CD4-positive, alpha-beta T cell (primary cell): ENCODE measurements at regions of chr11 and their contacts with region 1.

Region 1: DNA sequence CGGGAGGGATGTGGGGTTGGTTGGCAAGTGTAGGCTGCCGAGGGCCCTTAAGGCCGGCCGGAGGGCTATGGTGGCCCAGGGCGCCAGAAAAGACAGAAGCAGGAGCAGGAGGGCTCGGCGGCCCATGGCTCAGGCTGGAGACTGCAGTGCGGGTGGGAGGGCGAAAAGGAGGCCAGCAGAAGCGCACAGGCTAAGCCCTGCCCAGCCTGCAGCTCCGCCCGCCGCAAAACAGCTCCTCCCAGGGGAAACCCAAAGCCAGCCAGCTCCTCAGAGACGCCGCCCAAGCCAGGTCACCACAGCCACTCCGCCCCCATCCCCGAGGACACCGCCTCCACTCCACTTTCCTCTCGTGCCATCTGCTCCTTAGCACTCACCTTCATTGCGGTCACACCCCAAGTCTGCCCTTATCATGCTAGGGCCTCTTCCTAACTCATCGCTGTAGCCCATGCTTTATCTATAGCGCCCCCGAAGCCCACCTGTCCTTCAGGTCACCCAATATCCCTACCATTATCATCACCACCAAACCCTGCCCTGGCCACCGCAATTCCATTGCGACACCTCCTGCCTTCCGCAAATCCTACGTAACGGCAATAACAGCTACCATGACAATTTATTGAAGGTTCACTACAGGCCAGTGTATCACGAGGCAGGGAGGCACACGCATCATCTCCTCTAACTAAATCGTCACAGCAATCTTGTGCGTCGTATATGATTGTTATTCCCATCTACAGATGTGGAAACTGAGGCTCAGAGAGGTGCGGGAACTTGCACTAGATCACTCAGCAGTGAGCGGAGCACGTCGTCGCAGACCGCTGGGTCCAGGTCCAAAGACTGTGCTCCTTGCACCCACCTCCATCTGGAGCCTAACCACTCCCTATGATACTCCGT is at the start of gene PRCP:
- DNase-seq: peak; percentile 81 to 97 (median 91)
- ATAC-seq: peak; percentile 72
- H3K4me3 ChIP-seq: peak within 1 kb of the TSS; percentile 74
- H3K4me3 Mint-ChIP-seq: peak within 1 kb of the TSS; percentile 99
- H3K27ac ChIP-seq: peak within 1 kb of the TSS; percentile 94 to 98
- H3K27ac Mint-ChIP-seq: peak within 1 kb of the TSS; percentile 97
- H3K4me1 ChIP-seq: peaks cover 35% of the 10 kb centered on the region
- H3K4me1 Mint-ChIP-seq: peaks cover 42% of the 10 kb centered on the region
- H3K27me3 ChIP-seq: no peaks in the 10 kb centered on the region
- H3K27me3 Mint-ChIP-seq: no peaks in the 10 kb centered on the region
- CTCF ChIP-seq: no peak
- total RNA-seq, gene PRCP: 13.7 to 16.0 TPM

Region 2: DNA sequence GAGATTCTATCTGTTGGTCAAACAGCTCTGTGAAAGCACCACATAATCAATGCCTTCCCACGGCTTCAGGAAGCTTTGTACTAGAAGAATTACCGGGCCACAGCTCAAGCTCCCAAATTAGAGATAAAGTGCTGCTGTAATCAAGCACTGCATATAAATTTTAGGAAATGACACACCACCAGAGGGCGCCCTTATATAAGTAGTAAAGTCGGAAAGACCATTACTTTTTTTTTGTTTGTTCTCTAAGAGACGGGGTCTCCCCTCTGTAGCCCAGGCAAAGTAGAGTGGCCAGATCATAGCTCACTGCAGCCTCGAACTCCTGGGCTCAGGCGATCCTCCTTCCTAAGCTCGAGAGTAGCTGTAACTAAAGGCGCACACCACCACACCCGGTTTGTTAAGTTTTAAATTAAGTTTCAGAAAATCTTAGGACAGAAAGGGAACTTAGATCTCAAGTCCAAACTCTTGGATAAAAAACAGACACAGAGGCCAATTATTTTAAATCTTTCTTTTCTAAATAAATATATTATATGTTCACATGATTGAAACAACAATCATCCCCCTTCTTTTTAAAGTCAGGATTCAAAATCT is 32.9 kb before region 1 on chr11:
- CTCF ChIA-PET with region 1: interaction called, 8 read pairs
- POLR2A ChIA-PET with region 1: interaction called, 28 read pairs
- intact Hi-C with region 1: loop called (anchors 1 to 2 kb)
- DNase-seq: peak; percentile 37 to 88 (median 70)
- ATAC-seq: peak; percentile 66
- H3K4me3 ChIP-seq: no peak overlapping the region
- H3K4me3 Mint-ChIP-seq: no peak overlapping the region
- H3K27ac ChIP-seq: no peak overlapping the region
- H3K27ac Mint-ChIP-seq: no peak overlapping the region
- H3K4me1 ChIP-seq: peaks cover 5% of the 10 kb centered on the region
- H3K4me1 Mint-ChIP-seq: peaks cover 11% of the 10 kb centered on the region
- H3K27me3 ChIP-seq: no peaks in the 10 kb centered on the region
- H3K27me3 Mint-ChIP-seq: no peaks in the 10 kb centered on the region
- CTCF ChIP-seq: peak; percentile 80

Region 3: DNA sequence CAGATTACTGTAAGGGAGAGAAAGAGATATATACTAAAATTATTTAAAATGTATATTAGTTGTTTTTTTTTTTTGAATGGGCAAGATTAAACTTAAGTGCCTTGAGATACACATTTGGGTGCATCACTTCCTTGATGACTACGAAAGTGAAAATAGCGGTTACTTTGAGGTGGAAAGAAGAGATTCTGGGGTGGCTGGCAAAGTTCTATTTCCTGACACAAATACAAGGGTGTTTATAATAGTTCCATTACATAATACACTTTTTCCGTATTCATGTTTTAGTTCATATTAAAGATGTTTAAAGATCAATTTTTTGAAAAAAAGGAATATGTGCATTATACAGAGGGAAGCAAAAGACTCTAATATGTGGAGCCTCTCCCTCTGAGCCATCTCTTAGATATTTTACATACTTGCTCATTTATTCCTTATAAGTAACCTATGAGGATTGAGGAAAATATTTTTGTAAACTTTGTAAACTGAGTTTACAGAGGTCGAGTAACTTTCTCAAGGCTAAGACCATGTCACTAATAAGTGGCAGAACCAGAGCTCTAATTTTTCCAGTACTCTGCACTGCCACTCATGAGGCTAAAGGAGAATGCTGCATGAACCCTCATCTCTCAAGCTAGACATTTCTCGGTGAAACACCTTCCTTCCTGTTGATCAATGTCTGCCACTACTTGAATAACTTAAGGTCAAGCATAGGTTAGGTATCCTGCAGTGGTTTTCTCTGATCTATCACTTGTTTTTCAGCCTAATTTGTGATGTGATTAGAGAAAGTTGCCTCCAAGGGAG is 59.7 kb after region 1 on chr11:
- CTCF ChIA-PET with region 1: no interaction called
- POLR2A ChIA-PET with region 1: interaction called, 49 read pairs
- intact Hi-C with region 1: loop called in 1 of 2 experiments (anchors 2 kb)
- DNase-seq: peak in 10 of 14 experiments; percentile 12 to 92 (median 46)
- ATAC-seq: peak; percentile 85
- H3K4me3 ChIP-seq: peak overlapping the region; percentile 37
- H3K4me3 Mint-ChIP-seq: peak overlapping the region; percentile 69
- H3K27ac ChIP-seq: peak overlapping the region; percentile 76 to 81
- H3K27ac Mint-ChIP-seq: peak overlapping the region; percentile 97
- H3K4me1 ChIP-seq: peaks cover 45% of the 10 kb centered on the region
- H3K4me1 Mint-ChIP-seq: peaks cover 88% of the 10 kb centered on the region
- H3K27me3 ChIP-seq: no peaks in the 10 kb centered on the region
- H3K27me3 Mint-ChIP-seq: no peaks in the 10 kb centered on the region
- CTCF ChIP-seq: no peak

Region 4: DNA sequence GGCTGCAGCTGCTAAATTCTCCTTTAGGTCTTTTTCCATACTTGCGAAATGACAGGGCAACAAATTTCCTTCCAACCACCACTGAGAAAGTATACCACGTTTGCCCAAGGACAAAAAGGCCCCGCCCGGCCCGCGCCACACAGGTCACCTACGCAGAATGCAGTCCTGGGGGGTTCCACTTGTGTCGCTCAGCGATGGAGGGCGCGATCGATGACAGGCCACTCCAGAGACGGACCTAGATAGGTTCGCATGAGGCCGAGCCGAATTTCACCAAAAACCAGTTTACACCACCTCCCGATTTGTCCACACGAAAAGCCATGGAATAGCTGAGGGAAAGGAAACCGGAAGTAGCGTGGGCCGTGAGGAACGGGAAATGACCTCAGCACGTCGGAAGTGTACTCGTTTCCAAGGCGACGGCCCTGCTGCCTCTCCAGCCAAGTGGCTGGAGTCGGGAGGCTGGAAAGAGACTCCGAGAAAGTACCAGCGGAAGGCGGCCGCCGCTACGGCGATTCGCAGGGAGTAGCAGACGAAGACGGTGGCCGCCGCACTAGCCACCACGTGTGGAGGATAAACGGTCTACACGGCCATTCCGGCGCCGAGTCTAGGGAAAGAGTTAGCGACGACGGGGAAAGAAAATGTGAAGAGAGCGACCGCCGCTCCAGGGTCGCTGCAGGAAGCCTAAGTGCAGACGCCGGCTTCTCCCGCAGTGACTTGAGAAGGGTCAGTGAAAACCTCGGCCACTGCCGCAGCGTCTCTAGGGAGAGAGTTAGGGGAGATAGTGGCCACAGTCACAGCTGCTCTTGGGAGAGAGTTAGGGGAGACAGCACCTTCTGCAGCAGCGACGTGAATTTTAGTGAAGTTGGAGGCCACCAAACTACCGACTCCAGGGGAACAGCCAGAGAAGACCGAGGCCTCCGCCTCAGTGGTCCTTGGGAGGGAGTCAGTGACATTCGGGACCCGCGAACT is 293.1 kb after region 1 on chr11 and contains the start of gene ANKRD42:
- CTCF ChIA-PET with region 1: interaction called, 3 read pairs
- POLR2A ChIA-PET with region 1: interaction called, 37 read pairs
- intact Hi-C with region 1: loop called (anchors 2 kb)
- DNase-seq: peak; percentile 65 to 95 (median 76)
- ATAC-seq: peak; percentile 69
- H3K4me3 ChIP-seq: peak within 1 kb of the TSS; percentile 70
- H3K4me3 Mint-ChIP-seq: peak within 1 kb of the TSS; percentile 99
- H3K27ac ChIP-seq: peak within 1 kb of the TSS; percentile 88 to 97
- H3K27ac Mint-ChIP-seq: peak within 1 kb of the TSS; percentile 99
- H3K4me1 ChIP-seq: peaks cover 26% of the 10 kb centered on the region
- H3K4me1 Mint-ChIP-seq: peaks cover 60% of the 10 kb centered on the region
- H3K27me3 ChIP-seq: no peaks in the 10 kb centered on the region
- H3K27me3 Mint-ChIP-seq: no peaks in the 10 kb centered on the region
- CTCF ChIP-seq: no peak
- total RNA-seq, gene ANKRD42: 8.6 to 10.0 TPM

Region 5: DNA sequence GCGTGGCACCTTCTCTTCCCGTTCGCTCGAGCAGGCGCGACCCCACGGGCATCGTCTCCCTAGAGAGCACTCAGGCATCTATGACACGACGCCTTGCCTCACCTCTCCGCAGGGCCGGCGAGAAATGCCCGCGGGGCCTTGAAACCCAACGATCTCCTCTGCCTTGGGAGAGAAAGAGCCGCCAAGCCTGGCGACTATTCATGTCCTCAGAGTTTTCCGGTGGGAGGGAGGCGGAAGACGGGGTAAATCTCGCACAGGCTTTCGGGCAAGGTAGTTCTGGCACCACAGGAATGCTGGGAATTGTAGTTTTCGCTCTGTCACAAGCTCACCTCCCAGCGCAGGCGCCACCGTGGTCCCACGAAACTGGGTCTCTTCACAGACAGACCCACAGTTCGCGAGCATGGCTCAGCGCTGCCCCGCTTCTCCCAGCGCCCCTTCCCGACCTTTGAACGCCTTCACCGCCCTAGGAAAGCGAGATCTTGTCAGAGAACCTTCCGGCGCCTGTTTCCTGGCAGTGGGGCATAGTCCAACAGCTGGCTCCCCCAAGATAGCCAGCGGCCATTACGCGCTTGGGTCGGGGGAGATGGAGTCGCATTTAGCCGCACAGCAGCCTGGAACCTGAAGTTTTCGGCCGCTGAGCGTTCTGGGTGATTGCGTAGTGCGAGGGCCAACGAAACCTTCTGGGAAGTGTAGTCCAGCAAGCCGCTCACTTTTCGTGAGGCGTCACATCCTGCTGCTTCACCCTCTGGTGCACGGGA is 385.4 kb after region 1 on chr11 and contains the start of gene CCDC90B:
- CTCF ChIA-PET with region 1: interaction called, 6 read pairs
- POLR2A ChIA-PET with region 1: interaction called, 93 read pairs
- intact Hi-C with region 1: loop called (anchors 1 to 2 kb)
- DNase-seq: peak; percentile 88 to 98 (median 90)
- ATAC-seq: peak; percentile 90
- H3K4me3 ChIP-seq: peak within 1 kb of the TSS; percentile 92
- H3K4me3 Mint-ChIP-seq: peak within 1 kb of the TSS; percentile 97
- H3K27ac ChIP-seq: peak within 1 kb of the TSS; percentile 95 to 99
- H3K27ac Mint-ChIP-seq: peak within 1 kb of the TSS; percentile 100
- H3K4me1 ChIP-seq: peaks cover 13% of the 10 kb centered on the region
- H3K4me1 Mint-ChIP-seq: peaks cover 52% of the 10 kb centered on the region
- H3K27me3 ChIP-seq: no peaks in the 10 kb centered on the region
- H3K27me3 Mint-ChIP-seq: no peaks in the 10 kb centered on the region
- CTCF ChIP-seq: no peak
- total RNA-seq, gene CCDC90B: 23.5 to 25.7 TPM